Astrocyte of the cerebellum (primary cell): ENCODE measurements at regions of chr1 and their contacts with region 1.

Region 1: DNA sequence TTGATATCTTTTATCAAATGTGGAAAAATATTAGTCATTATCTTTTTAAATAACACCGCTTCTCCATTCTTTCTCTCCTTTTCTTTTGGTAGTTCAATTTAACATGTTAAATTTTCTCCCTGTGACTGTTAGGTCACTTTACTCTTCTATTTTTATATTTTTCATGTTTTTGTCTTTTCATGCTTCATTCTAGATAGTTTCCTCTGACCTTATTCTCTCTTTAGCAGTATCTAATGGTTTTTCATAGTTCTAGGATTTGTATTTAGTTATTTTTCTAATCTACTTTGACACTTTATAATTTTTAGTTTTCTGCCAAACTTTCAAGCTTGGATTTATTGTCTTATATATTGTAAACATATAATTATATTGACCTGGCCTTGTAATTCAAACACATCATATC is 116.0 kb downstream of the RASAL2 start:
- DNase-seq: no peak
- H3K4me3 ChIP-seq: no peak overlapping the region
- CTCF ChIP-seq: no peak

Region 2: DNA sequence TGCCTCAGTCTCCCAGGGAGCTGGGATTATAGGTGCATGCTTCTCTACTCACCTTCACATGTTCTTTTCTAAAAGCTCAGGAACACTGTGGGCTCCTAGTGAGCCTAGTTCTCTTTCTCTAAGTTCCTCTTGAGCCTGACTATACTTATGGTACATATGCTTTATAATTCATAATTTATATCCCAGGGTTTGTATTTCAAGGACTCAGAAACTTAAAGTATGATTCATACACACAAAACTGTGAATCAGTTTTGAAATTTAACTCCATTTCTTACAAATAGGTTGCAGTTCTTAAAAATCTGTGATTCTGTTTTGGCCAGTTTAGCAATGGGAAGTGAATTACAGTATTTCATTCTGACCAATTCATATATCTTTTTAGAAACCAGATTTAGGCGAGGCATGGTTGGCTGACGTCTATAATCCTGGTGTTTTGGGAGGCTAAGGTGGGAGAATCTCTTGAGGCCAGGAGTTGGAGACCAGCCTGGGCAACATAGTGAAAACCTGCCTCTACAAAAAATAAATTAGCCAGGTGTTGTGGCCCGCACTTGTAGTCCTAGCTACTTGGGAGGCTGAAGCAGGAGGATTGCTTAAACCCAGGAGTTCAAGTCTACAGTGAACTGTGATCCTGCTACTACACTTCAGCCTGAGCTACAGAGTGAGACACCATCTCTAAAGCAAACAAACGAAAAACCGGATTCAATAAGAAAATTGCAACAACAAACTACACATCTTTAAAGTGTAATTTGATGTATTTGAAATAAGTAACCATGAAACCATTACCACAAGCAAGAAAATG is 100.4 kb before region 1 on chr1:
- in situ Hi-C with region 1: no loop called
- DNase-seq: no peak
- H3K4me3 ChIP-seq: no peak overlapping the region
- CTCF ChIP-seq: no peak

Region 3: DNA sequence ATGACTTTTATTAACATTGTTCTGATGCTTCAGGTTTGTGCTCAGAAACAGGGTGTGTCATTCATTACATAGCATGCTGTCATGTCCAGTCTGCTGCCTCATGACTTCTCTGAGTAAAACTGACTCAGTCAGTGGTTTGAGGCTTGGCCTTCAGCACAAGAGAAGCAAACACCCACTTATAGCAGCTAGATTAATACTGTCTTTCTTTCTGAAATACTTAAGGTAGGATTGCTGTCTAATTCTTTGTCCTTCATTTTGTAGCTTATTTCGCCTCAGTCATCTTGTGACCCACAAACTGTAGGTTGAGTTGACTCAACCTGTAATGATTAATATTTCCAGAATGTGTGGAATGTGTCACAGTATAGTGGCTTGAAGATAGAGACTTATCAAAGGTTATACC is 83.1 kb before region 1 on chr1:
- in situ Hi-C with region 1: no loop called
- DNase-seq: peak; percentile 64
- H3K4me3 ChIP-seq: no peak overlapping the region
- CTCF ChIP-seq: no peak

Region 4: DNA sequence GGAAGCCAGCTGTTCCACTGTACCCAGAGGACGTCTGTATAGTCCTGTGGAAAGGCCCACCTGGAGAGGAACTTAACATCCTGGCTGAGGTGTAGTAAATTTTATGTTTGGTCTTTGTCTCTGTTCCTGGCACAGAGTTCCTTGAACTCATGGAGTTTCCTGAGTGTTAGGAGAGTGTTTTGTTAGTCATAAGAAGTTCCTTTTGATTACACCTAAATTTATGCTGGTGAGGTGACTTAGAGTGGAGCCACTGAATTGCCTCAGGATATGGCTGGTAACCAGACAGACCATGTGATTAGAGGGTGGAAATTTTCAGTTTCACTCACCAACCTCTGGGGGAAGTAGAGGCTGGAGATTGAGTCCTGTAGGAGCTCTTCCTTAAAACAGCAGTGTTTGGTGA is 58.1 kb before region 1 on chr1:
- in situ Hi-C with region 1: loop called (anchors 5 kb)
- DNase-seq: no peak
- H3K4me3 ChIP-seq: no peak overlapping the region
- CTCF ChIP-seq: no peak

Region 5: DNA sequence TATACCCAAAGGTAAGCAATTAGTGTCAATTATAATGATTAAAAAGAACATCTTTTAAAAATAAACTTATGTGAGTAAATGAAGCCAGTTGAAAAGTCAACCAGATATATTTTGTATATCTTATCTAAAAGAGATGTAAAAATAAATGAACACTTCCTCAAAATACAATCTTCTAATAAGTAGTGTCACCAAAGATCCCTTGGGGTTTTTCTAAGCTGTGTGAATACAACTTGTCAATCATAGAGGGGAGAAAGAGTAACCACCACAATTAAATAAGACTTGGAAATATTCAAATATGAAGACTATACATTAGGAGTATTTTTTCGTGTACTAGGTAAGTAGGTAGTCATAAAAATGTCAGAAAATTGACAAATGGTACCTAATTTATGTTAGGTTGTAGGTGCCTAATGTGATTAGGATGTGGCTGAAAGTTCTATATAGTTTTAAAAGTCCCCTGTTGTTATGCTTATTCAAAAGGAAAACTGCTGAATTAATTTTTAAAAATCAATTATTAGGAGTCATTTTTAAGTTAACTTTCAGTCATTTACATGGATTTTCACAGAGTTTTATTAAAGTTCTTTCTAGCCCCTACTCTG is 43.4 kb before region 1 on chr1:
- in situ Hi-C with region 1: no loop called
- DNase-seq: no peak
- H3K4me3 ChIP-seq: no peak overlapping the region
- CTCF ChIP-seq: no peak

Region 6: GRCh38 chr1:178706432-178706831 is 496.5 kb after region 1 on chr1:
- in situ Hi-C with region 1: no loop called
- DNase-seq: no peak
- H3K4me3 ChIP-seq: no peak overlapping the region
- CTCF ChIP-seq: no peak